Ascending aorta (tissue), 2 donors: ENCODE measurements at regions of chr4 and their contacts with region 1.

Region 1: DNA sequence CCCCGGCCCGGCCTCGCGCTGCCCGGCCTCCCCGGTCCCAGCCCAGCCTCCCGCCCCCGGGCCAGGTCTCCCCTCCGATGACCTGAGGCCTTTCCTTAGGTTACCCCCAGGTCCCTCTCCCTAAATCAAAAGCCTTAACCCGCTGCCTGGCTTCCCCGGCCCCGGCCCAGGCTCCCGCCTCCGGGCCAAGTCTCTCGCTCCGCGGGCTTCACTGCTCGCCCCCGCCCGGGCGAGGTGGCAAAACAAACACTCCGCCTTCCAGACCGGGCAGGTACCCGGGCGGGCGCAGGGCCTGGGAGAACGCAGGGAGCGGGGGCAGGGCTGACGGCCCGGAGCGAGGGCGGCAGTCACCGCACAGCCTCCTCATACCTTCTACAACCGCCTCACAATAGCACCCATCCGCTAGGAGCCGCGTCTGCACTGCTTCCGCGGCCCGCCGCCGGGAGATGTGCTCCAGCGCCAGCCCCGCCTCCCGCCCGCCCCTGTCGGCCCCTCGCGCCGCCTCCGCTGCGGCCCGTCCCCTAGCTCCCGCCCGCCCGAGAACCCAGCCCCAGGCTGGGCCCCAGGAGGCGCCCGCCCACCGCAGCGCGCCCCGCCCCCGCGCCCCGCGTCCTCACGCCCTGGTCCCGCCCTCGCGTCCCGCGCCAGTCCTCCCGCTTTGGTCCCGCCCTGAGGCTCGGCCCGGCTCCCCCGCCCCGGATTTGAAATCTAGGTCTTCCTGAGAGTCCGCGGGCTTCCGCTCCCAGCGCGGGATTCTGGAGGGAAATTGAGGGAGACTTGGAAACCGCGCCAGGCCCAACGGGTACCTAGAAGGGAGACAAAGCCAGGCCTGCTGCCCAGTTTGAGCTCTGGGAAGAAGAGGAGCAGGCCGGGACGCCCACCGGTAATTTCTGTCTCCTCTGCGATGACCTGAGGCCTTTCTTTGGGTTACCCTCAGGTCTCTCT is at the starts of genes CASP3 and PRIMPOL:
- DNase-seq: peak; percentile 88 to 98
- H3K4me3 ChIP-seq: peak within 1 kb of the TSS; percentile 88 to 100
- H3K27ac ChIP-seq: peak within 1 kb of the TSS; percentile 100
- H3K4me1 ChIP-seq: peaks cover 9 to 41% of the 10 kb centered on the region in 2 donors
- H3K27me3 ChIP-seq: no peaks in the 10 kb centered on the region
- CTCF ChIP-seq: peak in 1 of 3 experiments; percentile 17
- total RNA-seq, gene CASP3: 1.5 TPM
- total RNA-seq, gene PRIMPOL: 12.5 TPM

Region 2: GRCh38 chr4:183444214-183445066 is 1204.9 kb before region 1 on chr4 and contains the start of gene CDKN2AIP:
- intact Hi-C with region 1: loop called (anchors 5 kb)
- DNase-seq: peak; percentile 64 to 96
- H3K4me3 ChIP-seq: peak within 1 kb of the TSS; percentile 89 to 96
- H3K27ac ChIP-seq: peak within 1 kb of the TSS; percentile 95 to 99
- H3K4me1 ChIP-seq: peaks cover 12 to 30% of the 10 kb centered on the region in 2 donors
- H3K27me3 ChIP-seq: no peaks in the 10 kb centered on the region
- CTCF ChIP-seq: peak in 1 of 3 experiments; percentile 17
- total RNA-seq, gene CDKN2AIP: 34.5 TPM

Region 3: DNA sequence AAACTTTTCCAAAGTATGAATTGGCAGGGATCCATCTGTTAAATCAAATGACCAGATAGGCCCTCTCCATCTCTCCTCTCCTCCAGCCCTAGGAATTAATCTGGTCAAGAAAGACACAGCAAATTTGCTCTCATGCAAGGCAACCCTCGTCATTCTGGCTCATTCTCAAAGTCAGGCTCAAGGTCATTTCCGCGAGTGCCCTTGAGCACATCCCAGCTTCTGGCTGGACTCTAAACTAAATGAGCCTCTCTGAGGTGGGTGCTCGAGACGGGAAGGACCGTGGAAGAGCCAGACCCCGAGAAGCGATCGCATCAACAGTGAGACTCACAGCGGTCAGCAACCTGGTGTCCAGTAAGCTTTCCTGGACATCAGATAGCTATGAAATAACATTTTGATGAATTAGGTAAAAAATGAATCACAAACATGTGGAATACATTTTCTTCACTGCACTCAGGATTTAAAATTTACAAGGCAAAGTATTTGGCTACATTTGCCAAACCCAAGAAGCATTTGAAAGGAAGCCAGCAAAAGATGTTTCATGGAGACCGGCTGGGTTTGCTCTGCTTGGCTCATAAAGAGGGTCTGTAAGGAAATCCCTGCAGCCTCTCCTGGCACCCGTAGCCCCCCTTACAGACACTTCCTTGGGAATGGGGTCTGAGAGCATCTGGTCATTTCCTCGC is 552.6 kb before region 1 on chr4:
- intact Hi-C with region 1: no loop called
- DNase-seq: no peak
- H3K4me3 ChIP-seq: peak overlapping the region; percentile 37 to 59
- H3K27ac ChIP-seq: no peak overlapping the region
- H3K4me1 ChIP-seq: no peaks in the 10 kb centered on the region
- H3K27me3 ChIP-seq: no peaks in the 10 kb centered on the region
- CTCF ChIP-seq: no peak

Region 4: GRCh38 chr4:184263910-184264732 is 385.2 kb before region 1 on chr4:
- intact Hi-C with region 1: loop called (anchors 2 kb)
- DNase-seq: peak; percentile 46 to 98
- H3K4me3 ChIP-seq: no peak overlapping the region
- H3K27ac ChIP-seq: no peak overlapping the region
- H3K4me1 ChIP-seq: peaks cover 0 to 2% of the 10 kb centered on the region in 2 donors
- H3K27me3 ChIP-seq: no peaks in the 10 kb centered on the region
- CTCF ChIP-seq: peak; percentile 83 to 92 (median 90)

Region 5: GRCh38 chr4:184474263-184475095 is 174.8 kb before region 1 on chr4 and contains the start of gene IRF2:
- intact Hi-C with region 1: loop called (anchors 1 kb)
- DNase-seq: peak; percentile 87 to 98
- H3K4me3 ChIP-seq: peak within 1 kb of the TSS; percentile 89 to 95
- H3K27ac ChIP-seq: peak within 1 kb of the TSS; percentile 96 to 98
- H3K4me1 ChIP-seq: peaks cover 0 to 18% of the 10 kb centered on the region in 2 donors
- H3K27me3 ChIP-seq: no peaks in the 10 kb centered on the region
- CTCF ChIP-seq: peak in 2 of 3 experiments; percentile 7 to 15
- total RNA-seq, gene IRF2: 39.6 TPM

Region 6: DNA sequence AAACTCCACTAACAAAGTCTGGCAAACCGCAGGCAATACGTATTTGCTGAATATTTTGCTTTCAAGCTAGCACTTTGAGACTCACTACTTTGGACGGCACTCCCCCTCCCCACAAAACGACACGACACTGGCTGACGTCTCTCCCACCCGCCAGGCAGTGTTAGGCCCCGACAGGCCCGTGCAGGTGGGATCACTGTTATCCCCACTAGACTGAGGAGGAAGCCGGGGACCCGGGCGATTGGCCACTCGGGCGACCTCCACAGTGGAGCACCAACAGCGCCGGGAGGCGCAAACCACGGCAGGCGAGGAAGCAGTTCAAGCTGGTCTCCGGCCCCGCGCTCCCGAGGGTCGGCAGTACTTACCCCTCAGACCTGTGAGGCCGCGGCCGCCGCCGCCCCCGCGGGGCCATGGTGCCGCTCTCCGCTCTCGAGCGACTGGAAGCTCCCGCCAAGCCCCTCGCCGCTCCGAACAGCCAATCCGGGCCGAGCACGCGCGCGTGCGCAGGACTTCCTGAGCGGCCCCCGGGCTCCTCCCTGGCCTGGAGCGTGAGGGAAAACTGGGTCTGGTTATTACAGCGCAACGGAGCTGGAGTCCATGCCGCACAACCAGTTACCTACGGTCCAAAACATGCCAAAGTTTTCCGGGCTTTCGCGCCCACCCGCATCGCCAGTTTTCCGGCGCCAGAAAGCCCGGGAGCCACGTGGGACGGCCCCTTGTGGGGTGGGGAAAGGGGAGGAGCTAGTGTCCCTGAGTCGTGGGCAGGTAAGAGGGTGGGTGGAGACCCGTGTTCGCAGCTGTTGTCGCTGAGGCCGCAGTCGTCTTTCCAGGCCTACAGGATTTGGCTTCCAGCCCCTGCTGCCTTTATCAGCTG is 84.6 kb after region 1 on chr4 and contains the start of gene CENPU:
- intact Hi-C with region 1: loop called (anchors 5 kb)
- DNase-seq: peak; percentile 87 to 98
- H3K4me3 ChIP-seq: peak within 1 kb of the TSS; percentile 68 to 91
- H3K27ac ChIP-seq: peak within 1 kb of the TSS in 1 of 2 donors; percentile 58
- H3K4me1 ChIP-seq: peaks cover 0 to 8% of the 10 kb centered on the region in 2 donors
- H3K27me3 ChIP-seq: no peaks in the 10 kb centered on the region
- CTCF ChIP-seq: no peak
- total RNA-seq, gene CENPU: not detected

Region 7: GRCh38 chr4:184825896-184826690 is 176.8 kb after region 1 on chr4 and contains the start of gene ACSL1:
- intact Hi-C with region 1: loop called (anchors 2 kb)
- DNase-seq: peak; percentile 66 to 93
- H3K4me3 ChIP-seq: peak within 1 kb of the TSS; percentile 80 to 90
- H3K27ac ChIP-seq: peak within 1 kb of the TSS; percentile 76 to 85
- H3K4me1 ChIP-seq: peaks cover 0 to 10% of the 10 kb centered on the region in 2 donors
- H3K27me3 ChIP-seq: no peaks in the 10 kb centered on the region
- CTCF ChIP-seq: peak in 1 of 3 experiments; percentile 26
- total RNA-seq, gene ACSL1: 31.8 TPM

Region 8: GRCh38 chr4:185171373-185172071 is 522.2 kb after region 1 on chr4:
- intact Hi-C with region 1: loop called (anchors 10 kb)
- DNase-seq: no peak
- H3K4me3 ChIP-seq: no peak overlapping the region
- H3K27ac ChIP-seq: peak overlapping the region in 1 of 2 donors; percentile 2
- H3K4me1 ChIP-seq: peaks cover 0 to 22% of the 10 kb centered on the region in 2 donors
- H3K27me3 ChIP-seq: no peaks in the 10 kb centered on the region
- CTCF ChIP-seq: no peak